ENCODE measurements at regions of chr1 and their contacts with region 1.

Region 1: DNA sequence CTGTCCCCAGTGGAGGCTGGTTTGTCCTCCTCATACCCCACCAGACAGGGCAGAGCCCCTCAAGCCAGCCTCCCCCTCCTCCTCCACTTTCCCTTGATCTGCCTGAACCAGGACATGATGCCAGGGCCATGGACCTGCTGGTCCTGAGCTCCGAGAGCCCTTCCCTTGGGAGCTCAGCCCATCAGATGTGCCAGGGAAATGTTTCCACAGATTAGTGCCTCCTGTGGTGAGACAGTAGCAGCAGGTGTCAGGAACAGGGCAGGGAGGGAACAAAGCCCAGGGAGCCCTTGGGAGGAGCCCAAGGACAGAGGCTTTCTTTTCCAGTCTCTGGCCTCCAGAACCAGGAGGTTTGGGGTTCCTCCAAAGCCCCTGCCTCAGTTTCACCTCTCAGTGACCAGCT is 14.6 kb upstream of the SLC41A1 start:
- DNase-seq: no peak
- H3K4me3 ChIP-seq: no peak overlapping the region
- H3K27ac ChIP-seq: no peak overlapping the region
- H3K4me1 ChIP-seq: peaks cover 0 to 12% (median 2%) of the 10 kb centered on the region in 4 experiments; a peak in 4 of 7 replicates
- H3K27me3 ChIP-seq: no peaks in the 10 kb centered on the region
- CTCF ChIP-seq: no peak
- EP300 ChIP-seq: no peak
- POLR2A ChIP-seq: no peak
- RAD21 ChIP-seq: no peak

Region 2: DNA sequence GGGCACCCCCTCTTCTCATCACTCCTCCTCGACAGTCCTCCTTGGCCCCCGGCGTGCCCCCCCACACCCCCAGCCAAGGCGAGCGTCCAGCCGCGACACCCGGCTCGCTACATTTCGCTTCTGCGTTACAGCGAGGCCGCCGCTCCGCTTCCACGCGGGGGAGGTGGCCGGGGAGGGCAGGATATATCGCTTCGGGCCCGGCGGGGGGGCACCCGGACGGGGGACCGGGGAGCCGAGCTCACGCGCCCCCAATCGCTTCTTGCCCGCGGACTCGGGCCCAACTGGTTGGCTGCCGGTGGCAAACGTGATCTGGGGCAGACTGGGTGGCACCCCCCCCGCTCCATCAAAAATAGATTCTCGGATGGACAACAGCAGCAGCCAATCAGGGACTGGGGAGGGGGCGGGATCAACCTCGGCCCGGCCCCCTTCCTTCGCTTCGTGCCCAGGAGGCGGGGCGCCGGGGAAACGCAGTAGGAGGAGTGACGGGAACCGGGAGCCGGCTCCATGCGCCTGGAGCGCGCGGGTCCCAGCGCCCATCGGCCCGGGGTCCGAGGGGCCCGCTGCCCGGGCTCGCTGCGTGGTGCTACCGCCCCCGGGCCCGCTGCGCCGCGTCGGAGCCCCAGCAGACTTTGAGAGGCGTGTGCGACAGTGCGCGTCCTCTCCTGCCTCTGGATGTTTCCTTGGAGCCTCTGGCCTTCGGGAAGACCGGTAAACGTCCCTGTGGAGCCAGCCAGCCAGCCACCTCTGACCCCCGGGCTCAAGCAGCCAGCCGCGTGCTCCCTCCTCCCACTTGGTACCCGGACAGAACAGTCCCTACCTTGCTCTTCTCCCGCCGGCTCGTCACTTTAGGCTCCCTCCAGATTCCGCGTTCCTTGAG is 14.5 kb before region 1 on chr1 and contains the start of gene SLC41A1:
- CTCF ChIA-PET with region 1: interaction called, 25 read pairs
- POLR2A ChIA-PET with region 1: interaction called, 21 read pairs
- DNase-seq: peak; percentile 74 to 94
- H3K4me3 ChIP-seq: peak within 1 kb of the TSS; percentile 49 to 94 (median 64)
- H3K27ac ChIP-seq: peak within 1 kb of the TSS; percentile 26; the same call in 1 of the 2 replicates
- H3K4me1 ChIP-seq: peaks cover 2 to 7% (median 6%) of the 10 kb centered on the region in 4 experiments; a peak in 5 of 7 replicates
- H3K27me3 ChIP-seq: peaks cover 0 to 3% (median 0%) of the 10 kb centered on the region in 4 experiments; a peak in 2 of 7 replicates
- CTCF ChIP-seq: no peak
- EP300 ChIP-seq: no peak
- POLR2A ChIP-seq: peak; percentile 50 to 92
- RAD21 ChIP-seq: no peak
- total RNA-seq, gene SLC41A1: 42.3 and 43.2 TPM in 2 replicates